ENCODE measurements at regions of chrX and their contacts with region 1.

Region 1: GRCh38 chrX:10014462-10015356 is 47.6 kb downstream of the CLDN34 start:
- DNase-seq: peak; percentile 87
- ATAC-seq: peak; percentile 74
- H3K4me3 ChIP-seq: peak overlapping the region; percentile 76
- H3K27ac ChIP-seq: peak overlapping the region; percentile 70
- H3K4me1 ChIP-seq: peaks cover 28% of the 10 kb centered on the region
- H3K27me3 ChIP-seq: no peaks in the 10 kb centered on the region
- CTCF ChIP-seq: no peak

Region 2: GRCh38 chrX:10028283-10029104 is 13.8 kb after region 1 on chrX:
- CTCF ChIA-PET with region 1: no interaction called
- POLR2A ChIA-PET with region 1: no interaction called
- intact Hi-C with region 1: loop called (anchors 1 kb)
- DNase-seq: peak; percentile 49
- ATAC-seq: peak; percentile 34
- H3K4me3 ChIP-seq: no peak overlapping the region
- H3K27ac ChIP-seq: no peak overlapping the region
- H3K4me1 ChIP-seq: peaks cover 39% of the 10 kb centered on the region
- H3K27me3 ChIP-seq: no peaks in the 10 kb centered on the region
- CTCF ChIP-seq: no peak

Region 3: GRCh38 chrX:10089378-10089812 is 74.7 kb after region 1 on chrX:
- CTCF ChIA-PET with region 1: no interaction called
- POLR2A ChIA-PET with region 1: interaction called, 3 read pairs
- intact Hi-C with region 1: loop called (anchors 1 kb)
- DNase-seq: peak; percentile 92
- ATAC-seq: peak; percentile 96
- H3K4me3 ChIP-seq: no peak overlapping the region; the same call in 1 of the 2 replicates
- H3K27ac ChIP-seq: peak overlapping the region; percentile 78
- H3K4me1 ChIP-seq: peaks cover 22% of the 10 kb centered on the region
- H3K27me3 ChIP-seq: no peaks in the 10 kb centered on the region
- CTCF ChIP-seq: no peak

Measured in PC-3 (cell line).